Left ventricle myocardium superior (tissue), 1 donor: ENCODE measurements at regions of chr14 and their contacts with region 1.

Region 1: DNA sequence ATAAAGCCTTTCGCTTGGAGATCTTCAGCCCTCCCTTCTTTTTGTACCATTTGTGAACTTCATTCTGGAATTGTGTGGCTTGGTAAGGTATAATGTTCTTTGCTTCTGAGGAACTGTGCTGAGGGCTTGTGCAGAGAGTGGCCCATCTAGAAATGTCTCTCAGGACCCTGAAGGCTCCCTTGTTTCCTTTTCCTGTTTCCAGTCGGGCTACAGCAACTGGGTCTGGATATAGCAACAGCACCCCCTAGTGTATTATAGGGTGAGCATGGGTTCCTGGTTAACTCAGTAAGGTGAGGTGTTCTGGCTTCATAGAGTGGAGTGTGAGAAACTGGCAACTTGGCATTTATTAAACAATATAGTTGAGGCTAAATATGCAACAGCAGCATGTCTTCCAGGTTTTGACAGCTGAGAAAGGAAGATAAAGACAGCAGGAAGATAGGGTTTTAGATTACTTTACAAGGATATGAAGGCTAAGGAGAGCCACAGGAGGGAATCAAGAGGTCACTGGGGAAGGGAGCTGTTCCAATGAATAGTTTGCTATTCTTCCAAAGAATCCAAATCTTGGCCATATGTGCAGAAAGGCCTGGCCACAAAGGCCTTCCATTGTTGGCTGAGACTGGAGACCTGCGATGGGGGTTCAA is 49.1 kb upstream of the RNU6-8 start:
- DNase-seq: no peak
- ATAC-seq: peak; percentile 82

Region 2: DNA sequence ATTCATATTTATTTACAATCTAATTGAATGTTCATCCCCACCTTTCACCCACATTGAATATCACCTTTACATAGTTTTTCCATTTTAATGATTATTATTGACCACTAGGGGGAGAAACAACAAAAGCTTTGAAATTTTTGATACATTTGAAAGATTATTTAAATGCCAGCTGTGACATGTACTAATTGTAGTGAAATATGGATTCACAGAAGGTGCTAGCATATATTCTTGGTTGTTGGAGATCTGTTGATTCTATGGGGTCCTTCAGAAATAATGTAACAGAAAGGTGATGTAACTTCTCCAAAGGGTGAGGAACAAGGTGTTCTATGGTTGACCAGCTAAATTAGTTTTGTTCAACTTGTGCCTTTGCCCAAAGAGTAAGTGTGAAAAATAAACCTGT is 741.9 kb before region 1 on chr14:
- intact Hi-C with region 1: loop called (anchors 5 kb)
- DNase-seq: no peak
- ATAC-seq: no peak

Region 3: DNA sequence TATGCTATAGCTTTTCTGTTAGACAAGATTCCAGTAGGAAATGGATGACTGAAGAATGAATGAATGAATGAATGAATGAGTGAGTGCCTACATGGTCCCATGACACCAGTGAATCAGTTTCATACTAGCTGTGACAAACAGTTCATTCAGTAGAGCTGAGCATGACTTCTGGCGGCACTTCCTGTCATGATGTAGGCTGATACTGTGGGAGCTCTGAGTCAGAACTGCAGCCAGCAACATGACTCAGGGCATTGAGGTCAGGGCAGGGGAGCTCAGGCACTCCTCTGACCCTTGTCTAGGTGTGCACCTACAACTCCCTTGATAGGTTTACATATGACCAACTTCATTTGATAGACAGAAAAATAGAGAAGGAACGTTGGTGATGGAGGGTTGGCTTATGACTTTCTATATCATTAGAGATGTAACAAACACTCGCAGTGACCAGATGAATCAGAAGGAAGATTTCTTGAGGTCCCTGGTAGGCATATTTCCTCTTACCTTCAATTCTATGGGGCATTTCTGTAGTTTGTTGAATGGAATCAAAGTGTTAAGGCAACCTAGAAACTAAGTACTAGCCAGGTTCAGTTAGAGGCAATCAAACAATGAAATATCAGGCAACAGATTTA is 314.3 kb before region 1 on chr14:
- intact Hi-C with region 1: loop called (anchors 5 kb)
- DNase-seq: no peak
- ATAC-seq: peak; percentile 77

Region 4: DNA sequence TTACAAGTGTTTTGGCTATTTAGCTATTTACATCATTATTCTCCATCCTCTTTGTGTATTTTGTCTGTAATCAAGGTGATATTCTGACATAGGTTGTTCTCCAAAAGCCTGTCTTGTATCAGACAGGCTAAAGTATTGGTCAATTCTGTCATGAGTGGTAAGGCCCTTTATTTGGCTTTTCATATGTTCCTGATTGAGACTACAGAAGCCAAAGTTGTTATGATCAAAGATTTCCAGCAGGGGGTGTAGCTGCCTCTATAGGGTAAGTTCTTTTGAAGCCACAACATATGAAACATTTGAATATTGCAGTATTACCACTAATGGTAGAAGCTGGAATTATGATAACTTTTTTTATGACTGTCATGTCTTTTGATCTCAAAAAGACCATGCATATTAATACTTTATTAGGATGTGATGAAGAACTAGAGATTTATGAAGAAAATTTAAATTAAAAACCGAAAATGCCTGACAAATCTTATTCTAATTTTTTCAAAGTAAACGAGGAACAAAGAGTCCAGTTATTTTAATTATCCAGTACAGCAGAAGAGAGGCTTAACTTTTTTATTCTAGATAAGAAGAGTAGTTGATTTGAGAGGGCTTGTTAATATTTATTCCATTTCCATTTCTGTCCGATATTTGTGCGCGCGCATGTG is 178.5 kb before region 1 on chr14:
- intact Hi-C with region 1: loop called (anchors 5 kb)
- DNase-seq: no peak
- ATAC-seq: no peak

Region 5: GRCh38 chr14:32307881-32308582 is 55.9 kb after region 1 on chr14:
- intact Hi-C with region 1: no loop called
- DNase-seq: no peak
- ATAC-seq: no peak

Region 6: DNA sequence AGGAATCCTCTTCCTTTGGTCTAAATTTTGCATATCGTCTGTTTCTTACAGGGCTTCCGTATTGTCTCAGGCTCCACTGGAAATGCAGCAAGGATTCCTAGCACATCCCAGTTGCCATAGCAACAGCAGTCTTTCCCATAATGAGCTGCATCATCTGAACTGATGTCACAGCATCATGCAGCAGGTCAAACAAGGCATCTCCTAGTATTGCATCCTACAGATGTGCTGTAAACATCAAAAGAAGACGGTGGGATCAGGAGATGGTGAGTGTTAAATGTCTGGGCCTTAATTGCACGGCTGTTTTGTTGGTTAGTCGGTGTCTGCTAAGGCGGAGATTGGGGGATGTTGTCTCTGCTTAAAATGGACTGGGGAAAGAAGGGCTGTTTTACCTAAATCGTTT is 77.0 kb after region 1 on chr14 and contains the start of gene AKAP6:
- intact Hi-C with region 1: no loop called
- DNase-seq: no peak
- ATAC-seq: no peak
- total RNA-seq, gene AKAP6: 172 TPM

Region 7: GRCh38 chr14:32559595-32559994 is 307.4 kb after region 1 on chr14:
- intact Hi-C with region 1: loop called (anchors 10 kb)
- DNase-seq: no peak
- ATAC-seq: peak; percentile 61

Region 8: DNA sequence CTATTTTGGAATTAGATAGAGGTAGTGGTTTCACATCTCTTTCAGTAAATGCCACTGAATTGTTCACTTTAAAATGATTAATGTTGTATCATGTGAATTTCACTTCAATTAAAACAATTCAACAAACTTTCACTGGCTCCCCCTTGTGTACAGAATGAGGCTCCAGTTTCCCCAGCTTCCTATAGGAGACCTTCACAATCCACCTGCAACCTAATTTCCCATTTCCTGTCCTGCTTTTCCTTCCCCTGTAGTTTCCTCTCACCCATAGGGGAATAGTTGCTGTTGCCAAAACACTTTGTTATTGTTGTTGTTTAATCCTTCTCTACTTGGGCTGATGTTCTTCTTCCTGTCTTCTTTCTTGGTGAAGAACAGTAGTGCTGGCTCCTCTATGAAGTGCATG is 746.3 kb after region 1 on chr14:
- intact Hi-C with region 1: no loop called
- DNase-seq: no peak
- ATAC-seq: peak; percentile 36